ENCODE measurements at regions of chr2 and their contacts with region 1.

Region 1: DNA sequence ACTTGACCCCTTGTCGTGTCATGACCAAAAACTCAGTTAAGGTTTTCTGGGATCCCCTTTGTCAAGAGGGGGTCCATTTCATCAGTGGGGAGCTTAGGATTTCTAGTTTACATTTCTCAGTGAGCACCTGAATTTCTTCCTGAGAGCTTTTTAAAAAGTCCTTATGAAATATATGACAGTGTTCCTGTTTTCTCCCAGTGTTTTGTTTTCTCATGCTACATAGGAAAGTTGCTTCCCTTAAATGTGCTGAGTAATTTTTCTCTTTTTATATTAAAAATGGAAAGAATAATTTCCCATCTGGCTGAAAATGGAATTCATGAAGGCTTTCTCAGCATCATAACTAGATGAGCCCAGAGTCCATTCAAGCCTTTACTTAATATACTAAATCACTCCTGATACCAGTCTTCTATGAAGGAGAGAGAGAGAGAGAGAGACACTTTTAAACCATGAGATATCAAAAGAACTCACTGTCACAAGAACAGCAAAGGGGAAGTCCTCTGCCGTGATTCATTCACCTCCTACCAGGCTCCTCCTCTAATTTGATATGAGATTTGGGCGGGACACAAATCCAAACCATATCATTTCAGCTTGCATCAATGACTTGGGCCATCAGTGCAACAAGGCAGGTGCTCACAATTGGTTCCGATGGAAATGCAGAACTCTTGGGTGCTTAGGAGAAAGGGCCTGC is 61.1 kb downstream of the XRCC5 start:
- DNase-seq: no peak
- ATAC-seq: no peak; the same call in 2 of the 3 replicates
- H3K4me3 ChIP-seq: no peak overlapping the region
- H3K27ac ChIP-seq: no peak overlapping the region
- H3K4me1 ChIP-seq: no peaks in the 10 kb centered on the region
- H3K27me3 ChIP-seq: no peaks in the 10 kb centered on the region
- CTCF ChIP-seq: no peak
- EP300 ChIP-seq: no peak
- POLR2A ChIP-seq: no peak
- RAD21 ChIP-seq: no peak

Region 2: DNA sequence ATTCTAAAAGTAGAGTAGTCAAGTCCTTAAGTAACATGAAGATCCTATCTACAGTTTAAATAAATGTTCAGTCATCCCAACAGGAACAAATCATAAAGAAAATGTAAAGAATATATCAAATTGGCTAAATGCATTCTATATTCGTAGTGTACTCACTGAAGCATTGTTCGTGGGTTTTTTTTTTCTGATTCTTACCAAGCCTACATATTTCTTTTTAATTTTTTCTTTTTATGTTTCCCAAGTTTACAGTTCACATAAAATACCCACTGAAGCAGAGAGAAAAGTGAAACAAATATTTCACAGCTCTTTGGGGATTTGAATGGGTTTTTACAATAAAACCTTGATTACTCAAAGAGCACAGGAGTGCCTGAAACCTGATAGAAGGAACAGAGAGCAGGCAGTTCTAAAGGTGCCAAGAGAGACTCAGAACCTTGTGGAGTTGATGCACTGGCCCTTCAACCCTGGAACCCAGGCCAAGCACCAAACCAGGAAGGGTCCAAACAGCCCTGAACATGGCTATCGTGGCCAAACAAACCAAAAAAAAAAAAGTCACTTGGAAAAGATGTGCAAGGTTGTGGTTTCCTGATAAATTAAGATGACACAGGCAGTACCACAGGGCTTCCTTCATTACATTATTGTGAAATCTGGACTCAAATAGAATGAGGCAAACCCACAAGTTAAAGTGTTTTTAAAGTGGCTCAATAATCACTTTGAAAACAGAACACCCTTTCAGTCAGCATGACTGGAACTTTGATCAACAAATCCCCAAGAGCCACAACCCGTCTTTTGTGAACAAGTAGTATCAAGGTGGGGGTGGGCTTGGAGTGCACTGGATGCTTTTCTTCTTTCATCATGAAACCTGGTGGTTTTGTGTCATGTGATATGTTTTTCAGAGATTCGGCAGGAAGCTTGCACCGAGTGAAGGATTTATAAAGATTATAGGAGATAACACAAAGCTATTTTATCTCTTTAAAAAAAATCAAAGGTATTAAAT is 489.3 kb before region 1 on chr2:
- CTCF ChIA-PET with region 1: no interaction called
- POLR2A ChIA-PET with region 1: no interaction called
- RAD21 ChIA-PET with region 1: no interaction called
- SMC1A ChIA-PET with region 1: no interaction called
- in situ Hi-C with region 1: no loop called
- intact Hi-C with region 1: no loop called
- DNase-seq: peak; percentile 50
- ATAC-seq: peak; percentile 94
- H3K4me3 ChIP-seq: 0 out of 2 replicates have a peak overlapping the region, but pooled peaks have one; percentile 5
- H3K27ac ChIP-seq: no peak overlapping the region
- H3K4me1 ChIP-seq: no peaks in the 10 kb centered on the region
- H3K27me3 ChIP-seq: no peaks in the 10 kb centered on the region
- CTCF ChIP-seq: no peak
- EP300 ChIP-seq: peak; percentile 44 to 45; a peak in 2 of 4 replicates
- POLR2A ChIP-seq: no peak
- RAD21 ChIP-seq: no peak

Region 3: GRCh38 chr2:216151313-216152030 is 18.7 kb before region 1 on chr2:
- CTCF ChIA-PET with region 1: interaction called, 8 read pairs
- POLR2A ChIA-PET with region 1: interaction called, 3 read pairs
- RAD21 ChIA-PET with region 1: no interaction called
- SMC1A ChIA-PET with region 1: interaction called, 10 read pairs
- in situ Hi-C with region 1: no loop called
- intact Hi-C with region 1: no loop called
- DNase-seq: no peak
- ATAC-seq: no peak
- H3K4me3 ChIP-seq: no peak overlapping the region
- H3K27ac ChIP-seq: no peak overlapping the region
- H3K4me1 ChIP-seq: no peaks in the 10 kb centered on the region
- H3K27me3 ChIP-seq: no peaks in the 10 kb centered on the region
- CTCF ChIP-seq: peak in 1 of 3 experiments; percentile 13; a peak in 2 of 6 replicates
- EP300 ChIP-seq: no peak
- POLR2A ChIP-seq: no peak
- RAD21 ChIP-seq: no peak

Region 4: DNA sequence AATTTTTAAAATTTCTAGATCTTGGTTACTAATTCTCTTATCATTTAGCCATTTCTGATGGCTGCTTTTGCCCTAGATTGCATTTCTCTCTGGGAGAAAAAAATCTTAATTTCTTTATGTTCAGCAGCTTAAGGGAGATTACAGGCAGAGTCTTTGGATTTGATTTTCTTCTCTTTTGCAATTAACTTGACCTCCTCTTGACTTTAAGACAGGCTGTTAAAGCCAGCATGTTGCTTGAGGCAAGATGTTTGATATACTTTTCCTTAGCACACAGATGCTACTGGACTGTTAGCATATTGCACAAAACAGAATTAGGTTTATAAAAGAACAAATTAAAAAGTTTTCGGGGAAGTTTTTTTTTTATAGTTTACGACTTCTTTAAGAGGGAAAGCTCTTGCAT is 11.1 kb before region 1 on chr2:
- CTCF ChIA-PET with region 1: interaction called, 8 read pairs
- POLR2A ChIA-PET with region 1: interaction called, 3 read pairs
- RAD21 ChIA-PET with region 1: interaction called, 3 read pairs
- SMC1A ChIA-PET with region 1: interaction called, 19 read pairs
- in situ Hi-C with region 1: no loop called
- intact Hi-C with region 1: no loop called
- DNase-seq: no peak
- ATAC-seq: no peak
- H3K4me3 ChIP-seq: no peak overlapping the region
- H3K27ac ChIP-seq: no peak overlapping the region
- H3K4me1 ChIP-seq: no peaks in the 10 kb centered on the region
- H3K27me3 ChIP-seq: no peaks in the 10 kb centered on the region
- CTCF ChIP-seq: no peak
- EP300 ChIP-seq: no peak
- POLR2A ChIP-seq: no peak
- RAD21 ChIP-seq: no peak

Region 5: GRCh38 chr2:216183462-216183861 is 13.2 kb after region 1 on chr2:
- CTCF ChIA-PET with region 1: interaction called, 4 read pairs
- POLR2A ChIA-PET with region 1: no interaction called
- RAD21 ChIA-PET with region 1: interaction called, 3 read pairs
- SMC1A ChIA-PET with region 1: interaction called, 18 read pairs
- in situ Hi-C with region 1: no loop called
- intact Hi-C with region 1: no loop called
- DNase-seq: no peak
- ATAC-seq: peak; percentile 76
- H3K4me3 ChIP-seq: no peak overlapping the region
- H3K27ac ChIP-seq: peak overlapping the region; percentile 35; the same call in 1 of the 2 replicates
- H3K4me1 ChIP-seq: peaks cover 4% of the 10 kb centered on the region; the same call in 1 of the 2 replicates
- H3K27me3 ChIP-seq: no peaks in the 10 kb centered on the region
- CTCF ChIP-seq: no peak
- EP300 ChIP-seq: no peak
- POLR2A ChIP-seq: no peak
- RAD21 ChIP-seq: no peak

Region 6: GRCh38 chr2:216350214-216350789 is 180.1 kb after region 1 on chr2:
- CTCF ChIA-PET with region 1: no interaction called
- POLR2A ChIA-PET with region 1: no interaction called
- RAD21 ChIA-PET with region 1: no interaction called
- SMC1A ChIA-PET with region 1: no interaction called
- in situ Hi-C with region 1: no loop called
- intact Hi-C with region 1: no loop called
- DNase-seq: no peak
- ATAC-seq: no peak
- H3K4me3 ChIP-seq: no peak overlapping the region
- H3K27ac ChIP-seq: no peak overlapping the region
- H3K4me1 ChIP-seq: no peaks in the 10 kb centered on the region; the same call in 1 of the 2 replicates
- H3K27me3 ChIP-seq: no peaks in the 10 kb centered on the region
- CTCF ChIP-seq: no peak
- EP300 ChIP-seq: no peak
- POLR2A ChIP-seq: no peak
- RAD21 ChIP-seq: no peak